ENCODE measurements at regions of chr3 and their contacts with region 1.

Region 1: DNA sequence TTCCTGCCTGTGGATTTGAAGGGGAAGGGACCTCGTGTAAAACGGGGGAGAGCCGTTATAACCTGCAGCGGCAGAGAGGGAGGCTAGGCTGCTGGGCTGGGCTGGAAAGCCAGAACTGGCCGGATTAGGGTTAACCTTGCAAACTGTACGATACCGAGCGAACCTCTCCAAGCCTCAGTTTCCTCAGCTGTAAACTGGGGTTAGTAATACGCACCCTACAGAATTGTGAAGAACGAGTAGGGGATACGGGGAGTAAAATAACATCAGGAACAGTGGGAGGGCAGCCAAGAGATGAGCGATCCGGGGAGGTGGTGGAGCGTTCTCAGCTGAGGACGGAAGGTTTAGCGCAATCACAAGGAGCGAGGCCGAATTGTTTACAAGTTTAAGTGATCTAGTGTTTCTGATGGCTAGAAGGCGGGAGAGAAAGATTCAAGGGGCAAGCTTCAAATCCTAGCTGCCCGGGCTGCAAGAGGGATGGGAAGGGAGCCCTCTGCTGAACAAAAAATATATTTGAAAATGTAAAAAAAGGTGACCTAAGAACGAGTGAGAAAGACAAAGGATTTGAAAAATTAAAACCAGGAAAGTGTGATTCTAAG is 768 bp upstream of the SEMA5B start:
- DNase-seq: peak in 4 of 10 donors; percentile 14 to 83 (median 28)

Region 2: GRCh38 chr3:122481390-122481789 is 546.9 kb before region 1 on chr3:
- intact Hi-C with region 1: no loop called
- DNase-seq: no peak

Region 3: GRCh38 chr3:122793568-122794416 is 234.5 kb before region 1 on chr3 and contains the start of gene HSPBAP1:
- intact Hi-C with region 1: loop called (anchors 5 kb)
- DNase-seq: peak; percentile 90 to 98 (median 94)

Region 4: GRCh38 chr3:122942937-122943827 is 85.1 kb before region 1 on chr3:
- intact Hi-C with region 1: loop called (anchors 1 kb)
- DNase-seq: peak; percentile 40 to 96 (median 74)

Region 5: DNA sequence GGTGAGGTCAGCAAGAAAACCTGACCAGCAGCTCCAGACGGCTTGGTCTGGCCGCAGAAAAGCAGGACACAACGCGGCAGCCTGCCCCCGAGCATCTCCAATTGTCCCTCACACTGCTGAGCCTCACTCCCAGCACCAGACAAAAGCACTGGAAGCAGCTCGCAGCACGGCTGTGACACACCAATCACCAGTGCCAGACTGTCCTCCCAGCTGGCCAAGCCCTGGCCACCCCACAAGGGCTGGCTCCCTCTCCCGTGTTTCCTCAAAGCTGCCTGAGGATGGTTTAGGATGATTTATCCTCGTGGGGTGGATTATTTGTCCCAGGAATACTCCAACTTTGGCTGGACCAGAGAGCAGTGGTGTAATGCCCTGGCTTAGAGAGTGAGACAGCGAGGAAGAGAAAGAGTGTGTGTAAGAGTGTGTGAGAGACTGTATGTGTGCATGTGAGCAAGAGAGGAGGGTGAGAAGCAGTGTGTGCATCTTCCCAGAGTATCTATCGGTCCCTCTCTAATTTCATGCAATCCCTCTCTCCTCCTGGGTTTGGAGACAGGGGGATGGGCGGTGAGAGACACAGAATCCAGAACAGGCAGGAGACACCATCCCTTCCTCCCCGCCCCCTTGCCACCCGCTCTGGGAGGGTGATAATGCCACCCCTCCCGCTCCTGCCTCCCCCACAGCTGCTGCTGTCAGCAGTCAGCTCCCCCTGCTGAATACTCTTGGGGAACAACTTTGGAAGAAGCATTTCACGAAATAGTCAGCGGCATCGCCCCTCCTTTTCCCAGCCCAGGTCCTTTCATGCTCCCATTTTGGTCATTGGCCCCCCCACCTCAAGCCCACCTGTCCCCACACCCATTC is 35.0 kb before region 1 on chr3:
- intact Hi-C with region 1: loop called (anchors 5 kb)
- DNase-seq: peak in 9 of 10 donors; percentile 47 to 93 (median 66)

Region 6: DNA sequence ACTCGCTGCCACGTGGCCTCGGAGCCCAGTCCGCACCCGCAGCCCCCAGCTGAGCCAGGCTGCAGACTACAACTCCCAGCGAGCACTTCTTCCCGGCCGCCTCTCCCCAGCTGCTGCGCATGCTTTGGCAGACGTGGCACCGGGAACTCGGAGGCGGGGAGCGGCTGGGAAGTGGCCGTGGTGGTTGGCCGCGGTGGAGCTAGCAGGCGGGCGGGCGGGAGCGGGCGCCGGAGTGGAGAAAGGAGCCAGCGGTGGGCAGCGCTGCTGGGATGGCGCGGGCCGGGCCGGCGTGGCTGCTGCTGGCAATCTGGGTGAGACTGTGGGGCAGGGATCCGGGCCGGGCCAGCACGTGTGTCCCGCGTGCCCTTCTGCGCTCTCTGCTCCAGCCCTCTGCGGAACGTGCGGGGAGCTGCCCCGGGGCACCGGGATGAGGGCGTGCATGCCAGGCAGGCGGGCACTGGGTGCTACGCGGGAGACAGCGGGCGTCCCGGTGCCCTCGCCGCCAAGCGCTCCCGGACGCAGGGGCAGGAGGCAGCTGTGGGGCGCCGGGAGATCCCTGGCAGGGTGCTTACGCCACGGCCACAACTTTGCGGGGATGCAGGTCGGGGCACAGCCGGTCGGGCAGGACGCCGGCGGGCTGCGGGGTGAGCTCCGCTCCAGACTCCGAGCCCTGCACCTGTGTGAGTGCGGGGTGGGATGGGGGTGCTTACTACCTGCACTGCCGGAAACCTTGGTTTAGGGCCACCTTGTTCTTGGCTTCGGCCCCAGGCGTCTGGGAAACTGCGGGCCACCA is 38.8 kb after region 1 on chr3 and contains the start of gene PDIA5:
- intact Hi-C with region 1: loop called (anchors 2 kb)
- DNase-seq: peak; percentile 85 to 99 (median 93)

Region 7: GRCh38 chr3:123258811-123259420 is 230.6 kb after region 1 on chr3:
- intact Hi-C with region 1: loop called (anchors 5 kb)
- DNase-seq: no peak